ENCODE measurements at regions of chr1 and their contacts with region 1.

Region 1: DNA sequence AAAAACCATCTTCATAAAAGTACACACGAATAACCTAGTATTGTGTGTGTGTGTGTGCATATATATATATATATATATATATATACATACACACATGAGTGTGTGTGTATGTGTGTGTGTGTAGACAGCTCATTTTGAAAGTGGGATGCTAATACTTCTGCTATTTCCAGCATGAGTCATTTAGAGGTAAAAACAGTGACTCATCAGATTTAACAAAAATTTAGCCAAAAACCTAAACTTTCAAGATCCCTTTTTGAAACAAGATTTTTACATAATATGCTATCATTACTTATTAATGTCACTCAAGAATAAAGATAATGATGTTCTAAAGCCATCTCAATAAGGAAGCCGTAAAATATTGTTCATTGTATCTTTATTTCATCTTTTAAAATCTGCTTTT is 35.6 kb upstream of the ADGRL4 start:
- DNase-seq: peak; percentile 43
- H3K4me3 ChIP-seq: no peak overlapping the region
- H3K27ac ChIP-seq: no peak overlapping the region
- H3K4me1 ChIP-seq: peaks cover 19% of the 10 kb centered on the region
- H3K27me3 ChIP-seq: no peaks in the 10 kb centered on the region
- CTCF ChIP-seq: no peak

Region 2: GRCh38 chr1:78855258-78855657 is 186.9 kb before region 1 on chr1:
- CTCF ChIA-PET with region 1: no interaction called
- POLR2A ChIA-PET with region 1: no interaction called
- intact Hi-C with region 1: loop called (anchors 10 kb)
- DNase-seq: no peak
- H3K4me3 ChIP-seq: no peak overlapping the region
- H3K27ac ChIP-seq: no peak overlapping the region
- H3K4me1 ChIP-seq: no peaks in the 10 kb centered on the region
- H3K27me3 ChIP-seq: no peaks in the 10 kb centered on the region
- CTCF ChIP-seq: no peak

Region 3: DNA sequence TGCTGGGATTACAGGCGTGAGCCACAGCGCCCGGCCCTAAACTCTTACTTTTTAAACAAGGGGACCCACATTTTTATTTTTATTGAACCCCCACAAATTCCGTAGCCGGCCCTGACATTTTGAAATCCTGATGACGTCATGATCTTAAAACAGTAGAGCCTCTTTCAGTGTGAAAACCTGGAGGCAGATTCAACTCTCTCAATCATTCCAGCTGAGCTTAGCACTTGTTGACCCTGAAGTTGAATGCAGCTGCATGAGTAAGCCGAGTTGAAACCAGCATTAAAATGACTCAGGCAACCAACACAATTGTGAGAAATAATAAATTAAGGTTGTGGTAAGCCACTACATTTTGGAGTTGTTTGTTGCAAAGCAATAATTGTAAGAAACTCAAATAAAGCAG is 58.3 kb after region 1 on chr1:
- CTCF ChIA-PET with region 1: no interaction called
- POLR2A ChIA-PET with region 1: no interaction called
- intact Hi-C with region 1: loop called (anchors 10 kb)
- DNase-seq: peak; percentile 20
- H3K4me3 ChIP-seq: no peak overlapping the region
- H3K27ac ChIP-seq: no peak overlapping the region
- H3K4me1 ChIP-seq: no peaks in the 10 kb centered on the region
- H3K27me3 ChIP-seq: no peaks in the 10 kb centered on the region
- CTCF ChIP-seq: no peak

Measured in A673 (cell line).